H1 (cell line): ENCODE measurements at regions of chr12 and their contacts with region 1.

Region 1: GRCh38 chr12:71719615-71720370 is 33.9 kb downstream of the TMEM19 start:
- DNase-seq: no peak
- H3K4me3 ChIP-seq: no peak overlapping the region
- H3K27ac ChIP-seq: no peak overlapping the region
- H3K4me1 ChIP-seq: no peaks in the 10 kb centered on the region
- H3K27me3 ChIP-seq: no peaks in the 10 kb centered on the region
- CTCF ChIP-seq: no peak
- EP300 ChIP-seq: no peak
- POLR2A ChIP-seq: no peak
- RAD21 ChIP-seq: no peak

Region 2: DNA sequence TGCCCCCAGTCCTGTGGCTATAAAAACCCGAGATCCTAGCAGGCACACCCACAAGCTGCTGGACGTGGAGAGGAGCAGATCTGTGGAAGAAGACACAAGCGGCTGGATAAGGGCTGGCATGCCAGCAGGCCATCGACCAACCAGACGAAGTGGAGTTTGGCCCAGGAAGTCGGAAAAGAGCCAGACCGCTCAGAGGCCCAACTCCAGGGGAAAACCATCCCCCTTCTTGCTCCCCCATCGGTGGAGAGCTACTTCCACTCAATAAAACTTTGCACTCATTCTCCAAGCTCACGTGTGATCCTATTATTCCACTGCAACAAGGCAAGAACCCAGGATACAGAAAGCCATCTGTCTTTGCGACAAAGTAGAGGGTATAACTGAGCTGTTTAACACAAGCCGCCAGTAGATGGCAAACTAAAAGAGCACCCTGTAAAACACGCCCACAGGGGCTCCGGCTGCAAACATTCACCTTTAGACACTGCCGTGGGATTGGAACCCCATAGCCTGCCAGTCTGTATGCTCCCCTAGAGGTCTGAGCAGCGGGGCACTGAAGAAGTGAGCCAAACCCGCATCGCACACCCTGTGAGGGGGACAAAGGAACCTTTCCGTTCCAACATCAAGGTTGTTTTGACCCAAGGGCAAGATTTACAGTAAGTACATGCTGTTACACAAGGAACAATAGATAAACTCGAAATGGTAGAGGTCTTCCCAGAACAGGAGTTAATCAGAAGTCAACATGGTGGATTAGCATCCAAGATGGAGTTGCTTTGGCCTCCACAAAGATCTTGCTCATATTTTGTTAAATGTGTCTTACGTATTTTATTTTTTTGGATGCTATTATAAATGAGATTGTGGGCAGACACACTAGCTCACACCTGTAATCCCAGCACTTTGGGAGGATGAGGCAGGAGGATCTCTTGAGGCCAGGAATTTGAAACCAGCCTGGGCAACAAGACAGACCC is 12.2 kb after region 1 on chr12:
- CTCF ChIA-PET with region 1: interaction called, 12 read pairs
- POLR2A ChIA-PET with region 1: no interaction called
- DNase-seq: peak in 1 of 2 experiments; percentile 61
- H3K4me3 ChIP-seq: no peak overlapping the region
- H3K27ac ChIP-seq: no peak overlapping the region
- H3K4me1 ChIP-seq: no peaks in the 10 kb centered on the region; a peak in 1 of 7 replicates
- H3K27me3 ChIP-seq: no peaks in the 10 kb centered on the region
- CTCF ChIP-seq: peak in 2 of 3 experiments; percentile 38 to 47; a peak in 3 of 4 replicates
- EP300 ChIP-seq: no peak
- POLR2A ChIP-seq: no peak
- RAD21 ChIP-seq: no peak; a peak in 1 of 4 replicates